ENCODE measurements at regions of chr6 and their contacts with region 1.

Region 1: GRCh38 chr6:32685603-32686002 is 19.1 kb upstream of the HLA-DQB1 start:
- DNase-seq: no peak
- ATAC-seq: peak in 3 of 8 donors; percentile 33 to 52 (median 42)
- H3K4me3 ChIP-seq: no peak overlapping the region
- H3K27ac ChIP-seq: no peak overlapping the region
- H3K4me1 ChIP-seq: no peaks in the 10 kb centered on the region
- H3K27me3 ChIP-seq: peaks cover 0 to 53% (median 0%) of the 10 kb centered on the region in 7 donors
- CTCF ChIP-seq: no peak

Region 2: DNA sequence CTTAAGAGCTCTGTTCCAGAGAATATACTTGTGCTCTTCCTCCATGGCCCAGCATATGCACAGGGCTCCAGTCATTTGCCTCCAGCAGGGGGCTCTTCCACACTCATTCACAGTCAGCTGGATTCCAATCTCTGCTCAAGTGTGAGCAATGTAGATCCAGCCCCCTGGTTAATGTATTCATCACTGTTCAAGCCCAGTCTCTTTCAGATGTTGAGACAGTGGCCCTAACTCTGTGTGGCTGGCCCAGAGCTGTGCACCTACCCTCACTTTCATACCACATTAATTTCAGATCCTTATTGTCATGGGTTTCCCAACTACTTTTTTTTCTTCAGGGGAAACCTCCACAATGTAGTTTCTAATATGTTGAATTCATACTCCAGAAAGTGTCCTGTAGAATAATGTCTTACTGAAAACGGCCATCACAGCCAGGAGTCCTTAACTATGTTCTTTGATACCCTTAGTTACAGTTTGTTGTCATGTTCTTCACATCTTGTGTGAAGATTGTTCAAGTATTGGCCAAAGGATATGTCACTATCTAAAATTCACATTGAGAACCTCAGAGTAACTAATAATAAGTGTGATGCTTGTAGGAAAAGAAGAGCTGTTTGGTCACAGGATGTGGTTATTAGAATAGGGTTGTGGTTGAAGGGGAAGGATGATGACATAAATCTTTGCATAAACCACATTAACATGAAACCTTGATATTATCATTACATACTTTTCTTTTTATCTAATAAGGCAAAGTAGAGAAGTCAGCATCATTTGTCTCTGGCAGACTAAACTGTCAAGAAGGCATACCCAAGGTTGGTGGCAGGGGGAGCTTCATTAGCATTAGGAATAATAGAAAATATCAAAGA is 62.8 kb before region 1 on chr6:
- intact Hi-C with region 1: loop called in 2 of 10 experiments (anchors 10 kb)
- DNase-seq: peak in 1 of 2 donors; percentile 22
- ATAC-seq: peak in 7 of 8 donors; percentile 67 to 94 (median 81)
- H3K4me3 ChIP-seq: no peak overlapping the region
- H3K27ac ChIP-seq: peak overlapping the region in 1 of 10 donors; percentile 77
- H3K4me1 ChIP-seq: peaks cover 0 to 18% (median 0%) of the 10 kb centered on the region in 9 donors
- H3K27me3 ChIP-seq: no peaks in the 10 kb centered on the region
- CTCF ChIP-seq: peak in 8 of 9 donors; percentile 15 to 67 (median 34)

Region 3: GRCh38 chr6:32635526-32636123 is 50.0 kb before region 1 on chr6:
- intact Hi-C with region 1: no loop called
- DNase-seq: no peak
- ATAC-seq: no peak
- H3K4me3 ChIP-seq: no peak overlapping the region
- H3K27ac ChIP-seq: no peak overlapping the region
- H3K4me1 ChIP-seq: no peaks in the 10 kb centered on the region
- H3K27me3 ChIP-seq: peaks cover 0 to 15% (median 0%) of the 10 kb centered on the region in 7 donors
- CTCF ChIP-seq: no peak

Region 4: GRCh38 chr6:32718879-32719278 is 33.3 kb after region 1 on chr6:
- intact Hi-C with region 1: no loop called
- DNase-seq: no peak
- ATAC-seq: no peak
- H3K4me3 ChIP-seq: no peak overlapping the region
- H3K27ac ChIP-seq: no peak overlapping the region
- H3K4me1 ChIP-seq: no peaks in the 10 kb centered on the region
- H3K27me3 ChIP-seq: peaks cover 0 to 74% (median 0%) of the 10 kb centered on the region in 7 donors
- CTCF ChIP-seq: no peak